Calu3 (cell line): ENCODE measurements at regions of chr6 and their contacts with region 1.

Region 1: GRCh38 chr6:12313992-12314805 is 24.0 kb downstream of the EDN1 start:
- DNase-seq: peak; percentile 77
- H3K4me3 Mint-ChIP-seq: peak overlapping the region; percentile 44
- H3K27ac Mint-ChIP-seq: peak overlapping the region; percentile 94
- H3K4me1 Mint-ChIP-seq: peaks cover 37% of the 10 kb centered on the region
- H3K27me3 Mint-ChIP-seq: no peaks in the 10 kb centered on the region
- CTCF ChIP-seq: no peak

Region 2: GRCh38 chr6:12324514-12325147 is 10.4 kb after region 1 on chr6:
- CTCF ChIA-PET with region 1: interaction called, 11 read pairs
- intact Hi-C with region 1: no loop called
- DNase-seq: no peak
- H3K4me3 Mint-ChIP-seq: no peak overlapping the region
- H3K27ac Mint-ChIP-seq: peak overlapping the region; percentile 91
- H3K4me1 Mint-ChIP-seq: peaks cover 33% of the 10 kb centered on the region
- H3K27me3 Mint-ChIP-seq: no peaks in the 10 kb centered on the region
- CTCF ChIP-seq: no peak

Region 3: GRCh38 chr6:12348530-12349511 is 34.6 kb after region 1 on chr6:
- CTCF ChIA-PET with region 1: interaction called, 8 read pairs
- intact Hi-C with region 1: loop called (anchors 5 kb)
- DNase-seq: peak; percentile 61
- H3K4me3 Mint-ChIP-seq: peak overlapping the region; percentile 5
- H3K27ac Mint-ChIP-seq: peak overlapping the region; percentile 64
- H3K4me1 Mint-ChIP-seq: peaks cover 47% of the 10 kb centered on the region
- H3K27me3 Mint-ChIP-seq: no peaks in the 10 kb centered on the region
- CTCF ChIP-seq: no peak

Region 4: GRCh38 chr6:12483712-12484111 is 169.5 kb after region 1 on chr6:
- CTCF ChIA-PET with region 1: interaction called, 13 read pairs
- intact Hi-C with region 1: loop called (anchors 5 kb)
- DNase-seq: peak; percentile 47
- H3K4me3 Mint-ChIP-seq: peak overlapping the region; percentile 26
- H3K27ac Mint-ChIP-seq: peak overlapping the region; percentile 61
- H3K4me1 Mint-ChIP-seq: peaks cover 46% of the 10 kb centered on the region
- H3K27me3 Mint-ChIP-seq: no peaks in the 10 kb centered on the region
- CTCF ChIP-seq: no peak

Region 5: DNA sequence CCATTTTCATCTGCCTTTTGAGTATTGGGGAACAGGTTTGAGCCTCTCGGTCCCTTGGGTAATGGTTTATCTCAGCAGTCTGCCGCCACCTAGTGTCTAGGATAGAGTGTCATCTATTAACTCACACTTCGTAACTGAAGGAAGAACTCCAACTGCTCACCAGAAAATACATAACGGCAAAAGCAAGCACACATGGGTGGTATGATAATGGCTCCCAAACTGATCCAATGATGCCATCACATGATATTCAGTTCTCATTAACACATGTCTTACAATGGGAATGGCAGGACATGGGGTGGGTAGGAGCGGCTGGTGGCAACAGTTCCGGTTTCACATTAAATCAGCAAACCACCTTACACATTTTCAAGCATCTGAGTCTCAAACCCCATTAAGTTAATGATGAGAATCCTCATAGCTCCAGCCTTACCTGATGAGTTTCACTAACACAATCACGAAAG is 291.7 kb after region 1 on chr6:
- CTCF ChIA-PET with region 1: interaction called, 4 read pairs
- intact Hi-C with region 1: loop called (anchors 1 kb)
- DNase-seq: peak; percentile 60
- H3K4me3 Mint-ChIP-seq: no peak overlapping the region
- H3K27ac Mint-ChIP-seq: no peak overlapping the region
- H3K4me1 Mint-ChIP-seq: peaks cover 15% of the 10 kb centered on the region
- H3K27me3 Mint-ChIP-seq: no peaks in the 10 kb centered on the region
- CTCF ChIP-seq: peak; percentile 58

Region 6: GRCh38 chr6:12849413-12850198 is 535.4 kb after region 1 on chr6:
- CTCF ChIA-PET with region 1: no interaction called
- intact Hi-C with region 1: no loop called
- DNase-seq: no peak
- H3K4me3 Mint-ChIP-seq: no peak overlapping the region
- H3K27ac Mint-ChIP-seq: no peak overlapping the region
- H3K4me1 Mint-ChIP-seq: peaks cover 14% of the 10 kb centered on the region
- H3K27me3 Mint-ChIP-seq: peaks cover 18% of the 10 kb centered on the region
- CTCF ChIP-seq: no peak